ENCODE measurements at regions of chr22 and their contacts with region 1.

Region 1: GRCh38 chr22:24175160-24175808 is 6.0 kb upstream of the SUSD2 start:
- DNase-seq: peak; percentile 90
- ATAC-seq: peak; percentile 76

Region 2: DNA sequence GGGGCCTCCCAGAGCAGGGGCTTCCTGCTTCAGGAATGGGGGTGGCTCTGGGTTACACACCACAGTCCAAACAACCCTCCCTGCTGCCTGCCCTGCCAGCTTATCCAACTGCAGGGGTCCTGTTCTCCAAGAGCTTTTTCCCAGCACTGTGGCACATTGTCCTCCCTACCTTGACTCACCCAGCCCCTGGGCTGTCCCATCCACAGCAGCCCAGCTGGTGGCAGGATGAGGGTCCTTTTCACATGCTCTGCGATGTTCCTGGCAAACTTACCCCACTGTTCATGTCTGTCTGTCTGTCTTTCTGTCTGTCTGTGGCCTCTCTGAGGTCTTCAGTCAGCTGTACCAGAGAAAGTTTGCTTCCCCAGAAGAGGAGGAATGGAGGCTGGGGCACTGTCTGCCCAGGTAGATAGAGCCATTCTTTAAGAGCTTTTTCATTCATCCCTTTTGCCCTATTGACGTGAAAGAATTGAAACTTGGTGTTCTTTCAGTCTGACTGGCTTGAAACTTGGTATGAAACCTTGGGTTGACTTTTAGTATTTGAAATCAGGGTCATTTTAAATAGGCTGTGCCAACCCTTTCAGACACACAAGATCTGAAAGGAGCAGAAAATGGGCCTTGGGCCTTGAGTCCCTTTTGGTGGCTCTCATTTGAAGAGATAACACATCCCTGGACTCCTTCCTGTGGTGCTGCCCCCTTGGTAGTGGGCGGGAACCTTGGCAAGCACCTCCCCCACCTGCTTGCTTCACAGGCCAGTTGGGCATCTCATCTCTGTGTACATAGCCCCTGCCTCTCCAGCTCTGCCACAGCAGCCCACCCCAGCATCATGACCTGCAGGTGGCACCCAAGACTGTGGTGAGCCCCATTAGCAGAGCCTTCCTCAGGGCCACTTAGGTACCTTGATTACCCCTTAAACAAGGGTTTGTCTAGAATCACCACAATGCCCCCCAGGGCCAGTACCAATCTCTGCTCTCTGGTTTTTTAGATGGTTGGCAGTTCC is 68.6 kb before region 1 on chr22:
- intact Hi-C with region 1: loop called (anchors 5 kb)
- DNase-seq: no peak
- ATAC-seq: peak; percentile 25

Region 3: GRCh38 chr22:24133187-24133965 is 41.9 kb before region 1 on chr22:
- intact Hi-C with region 1: loop called (anchors 2 kb)
- DNase-seq: peak; percentile 53
- ATAC-seq: peak; percentile 69

Measured in Right ventricle myocardium superior (tissue), 1 donor.